Ascending aorta (tissue), 2 donors: ENCODE measurements at regions of chr11 and their contacts with region 1.

Region 1: DNA sequence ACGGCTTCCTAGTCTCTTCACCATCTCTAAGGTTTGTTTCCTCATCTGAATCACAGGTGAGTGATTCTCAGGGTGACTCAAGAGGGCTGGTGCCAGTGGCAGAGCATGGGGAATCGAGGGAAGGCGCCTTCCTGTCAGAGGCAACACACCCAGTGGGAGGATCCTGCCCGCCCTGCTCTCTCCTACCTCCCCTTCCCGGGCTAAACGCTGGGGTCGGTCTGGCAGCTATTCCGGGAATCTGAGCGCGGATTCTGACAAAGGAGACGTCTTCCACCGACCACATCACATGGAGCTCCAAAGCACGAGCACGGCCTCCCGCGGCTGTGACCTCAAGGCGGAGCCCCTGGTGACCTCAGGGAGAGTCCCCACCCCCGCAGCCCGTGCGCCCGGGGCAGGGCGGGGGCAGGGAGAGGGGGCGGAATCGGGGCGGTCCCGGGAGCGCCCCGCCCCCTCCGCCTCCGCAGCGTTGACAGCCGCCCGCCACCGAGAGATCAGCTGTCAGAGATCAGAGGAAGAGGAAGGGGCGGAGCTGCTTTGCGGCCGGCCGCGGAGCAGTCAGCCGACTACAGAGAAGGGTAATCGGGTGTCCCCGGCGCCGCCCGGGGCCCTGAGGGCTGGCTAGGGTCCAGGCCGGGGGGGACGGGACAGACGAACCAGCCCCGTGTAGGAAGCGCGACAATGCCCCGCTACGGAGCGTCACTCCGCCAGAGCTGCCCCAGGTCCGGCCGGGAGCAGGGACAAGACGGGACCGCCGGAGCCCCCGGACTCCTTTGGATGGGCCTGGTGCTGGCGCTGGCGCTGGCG is at the start of gene SMPD1:
- DNase-seq: peak; percentile 92 to 96
- H3K4me3 ChIP-seq: peak within 1 kb of the TSS; percentile 89 to 96
- H3K27ac ChIP-seq: peak within 1 kb of the TSS; percentile 90 to 95
- H3K4me1 ChIP-seq: peaks cover 9 to 14% of the 10 kb centered on the region in 2 donors
- H3K27me3 ChIP-seq: no peaks in the 10 kb centered on the region
- CTCF ChIP-seq: no peak
- total RNA-seq, gene SMPD1: 48.6 TPM

Region 2: GRCh38 chr11:6312106-6312505 is 78.0 kb before region 1 on chr11:
- intact Hi-C with region 1: no loop called
- DNase-seq: no peak
- H3K4me3 ChIP-seq: no peak overlapping the region
- H3K27ac ChIP-seq: no peak overlapping the region
- H3K4me1 ChIP-seq: peaks cover 0 to 8% of the 10 kb centered on the region in 2 donors
- H3K27me3 ChIP-seq: no peaks in the 10 kb centered on the region
- CTCF ChIP-seq: no peak

Region 3: DNA sequence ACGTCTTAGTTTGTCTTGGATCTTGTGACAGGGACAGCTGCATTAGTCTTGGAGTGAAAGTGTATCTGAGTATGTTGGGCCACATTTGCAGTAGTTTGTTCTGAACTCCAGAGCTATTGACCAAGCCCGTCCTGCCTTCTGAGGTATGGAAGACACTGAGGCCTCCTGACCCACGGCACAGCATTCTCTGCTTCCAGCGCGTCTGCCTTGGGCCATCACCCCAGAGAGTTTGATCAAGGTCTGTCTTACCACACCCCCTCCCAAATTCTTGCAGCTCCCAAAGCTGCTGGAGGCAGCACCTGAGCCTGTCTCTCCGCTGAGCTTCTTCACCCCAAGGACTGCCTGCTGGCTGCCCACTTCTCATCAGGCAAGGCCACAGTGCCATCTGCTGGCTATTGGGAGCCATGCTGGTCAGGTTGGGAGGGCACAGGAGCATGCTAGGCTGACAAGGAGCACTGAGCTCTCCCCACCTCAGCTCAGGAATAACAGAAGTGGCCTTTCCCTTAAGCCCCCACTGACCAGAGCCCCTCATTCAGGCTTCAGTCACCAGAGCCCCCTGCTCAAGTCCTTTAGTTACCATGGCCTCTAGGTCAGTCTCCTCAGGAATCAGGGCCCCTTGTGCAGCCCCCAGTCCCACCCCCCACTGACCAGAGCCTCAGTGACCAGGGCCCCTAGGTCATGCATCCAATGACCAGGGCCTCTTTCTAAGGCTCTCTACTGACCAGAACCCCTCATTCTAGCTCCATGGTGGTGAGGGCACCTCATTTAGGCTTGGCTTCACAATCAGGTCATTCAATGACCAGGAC is 27.0 kb before region 1 on chr11:
- intact Hi-C with region 1: loop called (anchors 2 kb)
- DNase-seq: peak; percentile 47 to 93
- H3K4me3 ChIP-seq: peak overlapping the region in 1 of 2 donors; percentile 7
- H3K27ac ChIP-seq: peak overlapping the region; percentile 88 to 92
- H3K4me1 ChIP-seq: peaks cover 9 to 18% of the 10 kb centered on the region in 2 donors
- H3K27me3 ChIP-seq: no peaks in the 10 kb centered on the region
- CTCF ChIP-seq: peak; percentile 80 to 93 (median 87)

Region 4: DNA sequence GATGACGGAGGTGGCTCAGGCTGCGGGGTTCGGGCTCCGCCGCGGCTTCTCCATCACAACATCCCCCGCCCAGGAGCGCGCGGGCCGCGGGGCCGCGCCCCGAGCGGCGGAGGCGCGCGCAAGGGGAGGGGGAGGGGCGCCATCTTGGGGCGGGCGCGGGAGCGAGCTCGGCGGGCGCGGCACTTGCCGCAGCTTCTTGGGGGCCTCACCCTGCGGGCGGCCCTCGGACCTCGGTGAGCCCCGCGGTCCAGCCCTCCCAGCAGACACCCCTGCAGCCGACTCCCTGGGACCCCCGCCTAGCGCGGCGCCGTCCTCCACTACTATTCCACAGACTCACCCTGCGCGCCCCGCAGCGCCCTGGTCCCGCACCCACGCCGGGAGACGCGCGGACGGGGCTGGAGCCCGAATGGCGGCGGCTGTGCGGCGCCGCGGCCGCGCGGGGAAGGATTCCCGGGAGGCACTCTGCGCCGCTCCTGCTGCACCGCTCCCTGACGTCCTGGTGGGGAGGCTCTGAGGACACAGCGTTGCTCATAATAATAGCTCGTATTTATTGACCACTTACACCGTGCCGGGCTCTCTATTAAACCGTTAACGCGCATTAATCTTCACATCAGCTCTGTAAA is 29.0 kb after region 1 on chr11 and contains the start of gene APBB1:
- intact Hi-C with region 1: loop called (anchors 1 kb)
- DNase-seq: peak in 1 of 2 donors; percentile 83
- H3K4me3 ChIP-seq: peak within 1 kb of the TSS; percentile 91 to 99
- H3K27ac ChIP-seq: peak within 1 kb of the TSS; percentile 90 to 92
- H3K4me1 ChIP-seq: peaks cover 0 to 22% of the 10 kb centered on the region in 2 donors
- H3K27me3 ChIP-seq: no peaks in the 10 kb centered on the region
- CTCF ChIP-seq: peak in 1 of 3 experiments; percentile 16
- total RNA-seq, gene APBB1: 29.2 TPM

Region 5: DNA sequence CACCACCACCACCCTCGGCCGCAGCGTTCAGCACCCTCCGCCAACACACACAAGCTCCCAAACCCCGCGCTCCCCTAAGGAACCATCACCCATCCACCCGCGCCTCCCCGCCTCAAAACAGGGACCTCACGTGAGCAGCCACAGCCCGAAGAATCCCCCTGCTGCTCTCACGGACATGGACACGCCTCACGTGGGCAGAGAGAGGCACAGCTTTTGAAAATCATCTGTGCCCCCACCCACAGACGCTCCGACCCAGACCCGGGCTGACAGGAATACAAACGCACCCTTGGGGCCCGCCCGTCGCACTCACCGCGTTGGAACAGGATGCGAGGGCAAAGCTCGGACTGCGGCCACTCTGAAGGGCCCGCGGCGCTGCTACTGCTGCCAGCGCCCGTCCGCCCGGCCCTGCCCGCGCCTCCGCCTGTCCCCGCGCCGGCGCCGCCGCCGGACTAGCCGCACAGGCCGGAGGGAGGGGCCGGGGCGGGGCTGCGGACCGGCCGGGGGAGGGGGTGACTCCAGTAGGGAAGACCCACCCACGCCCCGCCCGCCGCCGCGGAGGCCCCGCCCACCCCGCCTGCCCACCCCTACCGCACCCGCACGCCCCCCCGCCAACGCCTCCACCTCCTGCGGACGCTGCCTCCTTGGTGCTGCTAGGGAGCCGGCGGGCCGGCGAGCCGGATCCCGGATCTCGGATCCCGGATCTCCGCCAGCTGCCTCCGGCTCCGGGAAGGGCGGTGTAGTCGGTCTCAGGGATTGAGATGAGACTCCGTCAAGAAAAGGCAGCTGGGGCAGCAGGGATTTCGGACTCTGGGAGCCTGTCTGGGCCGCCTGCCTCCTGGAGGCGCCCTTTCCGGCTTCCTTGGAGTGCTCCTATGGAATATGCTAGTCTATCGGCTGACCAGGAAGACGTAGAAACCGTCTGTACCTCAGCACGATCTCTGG is 83.6 kb after region 1 on chr11 and contains the start of gene TRIM3:
- intact Hi-C with region 1: loop called (anchors 2 kb)
- DNase-seq: peak; percentile 74 to 96
- H3K4me3 ChIP-seq: peak within 1 kb of the TSS; percentile 85 to 88
- H3K27ac ChIP-seq: peak within 1 kb of the TSS; percentile 94 to 96
- H3K4me1 ChIP-seq: peaks cover 7 to 24% of the 10 kb centered on the region in 2 donors
- H3K27me3 ChIP-seq: no peaks in the 10 kb centered on the region
- CTCF ChIP-seq: peak in 2 of 3 experiments; percentile 22 to 39
- total RNA-seq, gene TRIM3: 33.8 TPM

Region 6: GRCh38 chr11:6481012-6481923 is 91.1 kb after region 1 on chr11 and contains the starts of genes ARFIP2 and TIMM10B:
- intact Hi-C with region 1: loop called (anchors 1 kb)
- DNase-seq: peak; percentile 96 to 99
- H3K4me3 ChIP-seq: peak within 1 kb of the TSS; percentile 92 to 94
- H3K27ac ChIP-seq: peak within 1 kb of the TSS; percentile 95
- H3K4me1 ChIP-seq: peaks cover 7 to 27% of the 10 kb centered on the region in 2 donors
- H3K27me3 ChIP-seq: no peaks in the 10 kb centered on the region
- CTCF ChIP-seq: no peak
- total RNA-seq, gene ARFIP2: 87.8 TPM
- total RNA-seq, gene TIMM10B: 19.2 TPM

Region 7: GRCh38 chr11:6505577-6506240 is 115.6 kb after region 1 on chr11:
- intact Hi-C with region 1: loop called (anchors 5 kb)
- DNase-seq: no peak
- H3K4me3 ChIP-seq: no peak overlapping the region
- H3K27ac ChIP-seq: peak overlapping the region in 1 of 2 donors; percentile 15
- H3K4me1 ChIP-seq: no peaks in the 10 kb centered on the region
- H3K27me3 ChIP-seq: no peaks in the 10 kb centered on the region
- CTCF ChIP-seq: peak; percentile 55 to 70 (median 62)

Region 8: DNA sequence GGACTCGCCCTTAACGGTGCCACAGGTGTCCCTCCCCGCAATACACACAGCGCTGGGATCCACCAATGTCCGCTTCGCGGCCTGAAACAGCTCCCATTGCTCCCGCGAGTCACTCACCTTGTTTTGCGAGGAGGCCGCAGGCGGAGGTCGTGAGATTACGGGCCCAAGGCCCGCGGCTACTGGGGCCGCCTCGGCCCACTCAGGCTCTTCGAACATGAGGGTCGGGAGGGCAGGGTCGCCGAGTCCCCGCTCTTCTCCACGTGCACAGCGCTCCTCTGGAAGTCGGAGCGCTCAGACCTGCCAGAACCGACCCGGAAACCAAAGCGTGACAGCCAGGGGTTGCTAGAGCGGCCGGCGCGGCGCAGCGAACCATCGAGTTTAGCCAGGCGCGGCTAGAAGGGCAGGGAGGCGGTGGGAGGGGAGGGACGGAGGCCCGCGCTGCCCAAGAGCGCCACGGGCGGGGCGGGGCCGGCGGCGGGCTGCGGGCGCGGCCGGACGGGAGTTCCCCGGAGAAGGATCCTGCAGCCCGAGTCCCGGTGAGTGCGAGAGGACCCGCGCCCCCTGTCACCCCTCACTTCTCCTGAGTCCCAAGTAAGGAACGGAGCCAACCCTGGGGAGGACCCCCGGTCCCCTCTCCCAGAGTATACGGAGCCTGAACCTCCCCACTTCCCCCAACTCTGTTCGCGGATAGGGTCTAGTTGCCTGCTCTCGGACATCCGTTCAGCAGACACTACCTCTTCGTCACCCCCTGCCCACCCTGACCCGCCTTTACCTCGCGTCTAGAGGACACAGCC is 213.4 kb after region 1 on chr11 and contains the starts of genes ILK and RRP8:
- intact Hi-C with region 1: loop called (anchors 5 kb)
- DNase-seq: peak; percentile 59 to 95
- H3K4me3 ChIP-seq: peak within 1 kb of the TSS; percentile 64 to 92
- H3K27ac ChIP-seq: peak within 1 kb of the TSS; percentile 95 to 97
- H3K4me1 ChIP-seq: peaks cover 25 to 34% of the 10 kb centered on the region in 2 donors
- H3K27me3 ChIP-seq: no peaks in the 10 kb centered on the region
- CTCF ChIP-seq: peak in 1 of 3 experiments; percentile 40
- total RNA-seq, gene ILK: 183 TPM
- total RNA-seq, gene RRP8: 9.2 TPM

Region 9: GRCh38 chr11:8101421-8101820 is 1711.3 kb after region 1 on chr11:
- intact Hi-C with region 1: no loop called
- DNase-seq: no peak
- H3K4me3 ChIP-seq: no peak overlapping the region
- H3K27ac ChIP-seq: no peak overlapping the region
- H3K4me1 ChIP-seq: no peaks in the 10 kb centered on the region
- H3K27me3 ChIP-seq: no peaks in the 10 kb centered on the region
- CTCF ChIP-seq: no peak